Heart right ventricle (tissue), 16 donors: ENCODE measurements at regions of chr18 and their contacts with region 1.

Region 1: DNA sequence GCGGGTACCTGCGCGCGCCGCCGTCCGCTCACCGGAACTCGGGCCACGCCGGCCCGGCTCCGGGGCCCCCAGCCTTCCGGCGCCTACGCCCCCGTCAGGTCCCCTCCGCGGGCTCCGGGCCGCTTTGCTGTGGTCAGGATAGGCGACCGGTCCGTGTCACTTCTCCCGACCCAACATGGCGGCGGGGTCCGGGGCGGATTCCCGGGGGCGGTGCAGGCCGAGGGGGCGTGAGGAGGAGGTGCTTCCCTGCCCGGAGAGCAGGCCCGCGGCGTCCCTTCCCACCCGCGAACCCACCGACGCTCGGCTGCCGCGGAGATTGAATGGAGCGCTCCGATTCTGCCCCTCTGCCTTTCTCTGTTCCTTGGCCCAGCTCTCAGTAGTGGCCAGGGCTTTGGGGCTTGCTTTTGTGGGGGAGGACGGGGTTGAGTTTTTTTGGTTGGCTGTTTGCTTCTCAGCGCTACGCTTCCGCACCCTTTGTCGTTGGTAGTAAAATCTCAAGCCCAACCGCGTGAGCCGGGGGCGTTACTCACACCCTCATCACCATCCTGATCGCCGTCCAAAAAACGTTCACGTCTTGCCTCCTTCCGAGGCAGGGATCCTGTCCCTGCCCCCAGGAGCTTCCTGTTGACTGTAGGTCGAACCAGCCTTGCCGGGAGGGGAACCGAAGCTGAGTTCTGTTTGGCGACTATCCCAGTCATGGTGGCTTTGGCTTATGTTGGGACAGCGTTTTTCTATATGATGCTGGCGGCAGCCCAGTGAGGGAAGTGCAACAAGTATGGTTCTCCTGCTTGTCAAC is 532 bp upstream of the YES1 start:
- DNase-seq: peak; percentile 87
- ATAC-seq: peak; percentile 85 to 95 (median 88)
- H3K4me3 ChIP-seq: peak overlapping the region; percentile 74 to 98 (median 90)
- H3K27ac ChIP-seq: peak overlapping the region; percentile 61 to 98 (median 96)
- H3K4me1 ChIP-seq: peaks cover 0 to 58% (median 43%) of the 10 kb centered on the region in 9 donors
- H3K27me3 ChIP-seq: peaks cover 0 to 82% (median 0%) of the 10 kb centered on the region in 7 donors
- CTCF ChIP-seq: no peak

Region 2: DNA sequence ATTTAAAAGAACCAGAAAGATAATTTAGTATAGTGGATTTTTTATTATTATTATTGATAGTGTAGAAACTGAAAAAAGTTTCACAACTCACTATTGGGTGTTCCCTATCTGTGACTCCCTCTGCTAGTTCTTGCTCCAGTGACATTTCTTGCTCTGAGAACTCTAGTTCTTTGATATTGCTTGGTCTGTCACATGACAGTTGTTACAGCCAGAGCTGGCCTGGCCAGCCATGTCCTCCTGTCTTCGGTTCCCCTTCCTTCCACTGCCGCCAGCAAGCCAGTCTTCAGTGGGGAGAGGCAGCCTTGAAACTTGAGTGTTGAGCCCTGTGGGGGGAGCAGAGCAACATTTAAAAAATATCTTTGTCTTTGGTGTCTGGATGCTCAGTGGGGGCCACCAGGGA is 537.1 kb before region 1 on chr18:
- intact Hi-C with region 1: loop called in 1 of 10 experiments (anchors 10 kb)
- DNase-seq: no peak
- ATAC-seq: peak in 1 of 8 donors; percentile 55
- H3K4me3 ChIP-seq: no peak overlapping the region
- H3K27ac ChIP-seq: no peak overlapping the region
- H3K4me1 ChIP-seq: no peaks in the 10 kb centered on the region
- H3K27me3 ChIP-seq: peaks cover 0 to under 1% (median 0%) of the 10 kb centered on the region in 7 donors
- CTCF ChIP-seq: no peak

Region 3: GRCh38 chr18:741931-742512 is 70.6 kb before region 1 on chr18:
- intact Hi-C with region 1: loop called in 2 of 10 experiments (anchors 5 kb)
- DNase-seq: no peak
- ATAC-seq: peak; percentile 55 to 87 (median 76)
- H3K4me3 ChIP-seq: no peak overlapping the region
- H3K27ac ChIP-seq: peak overlapping the region in 2 of 10 donors; percentile 21 to 42
- H3K4me1 ChIP-seq: peaks cover 0 to 10% (median 0%) of the 10 kb centered on the region in 9 donors
- H3K27me3 ChIP-seq: no peaks in the 10 kb centered on the region
- CTCF ChIP-seq: peak; percentile 65 to 89 (median 80)

Region 4: DNA sequence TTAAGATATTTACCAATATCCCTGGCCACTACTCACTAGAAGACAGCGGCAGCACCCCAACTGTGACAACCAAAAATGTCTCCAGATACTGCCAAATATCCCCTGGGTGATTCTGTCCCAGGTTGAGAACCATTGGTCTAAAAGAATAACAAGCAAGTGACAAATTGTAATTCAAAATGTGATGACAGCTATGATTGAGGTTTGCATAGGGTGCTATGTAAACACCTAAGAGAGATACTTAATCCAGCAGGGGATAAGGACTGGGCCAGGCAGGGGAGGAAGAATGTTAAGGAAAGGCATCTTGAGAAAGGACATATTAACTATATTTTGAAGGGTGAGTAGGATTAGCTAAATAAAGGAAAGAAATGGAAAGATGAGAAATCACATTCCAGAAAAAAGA is 62.1 kb before region 1 on chr18:
- intact Hi-C with region 1: loop called in 3 of 10 experiments (anchors 5 to 10 kb)
- DNase-seq: no peak
- ATAC-seq: no peak
- H3K4me3 ChIP-seq: no peak overlapping the region
- H3K27ac ChIP-seq: no peak overlapping the region
- H3K4me1 ChIP-seq: peaks cover 0 to 5% (median 0%) of the 10 kb centered on the region in 9 donors
- H3K27me3 ChIP-seq: no peaks in the 10 kb centered on the region
- CTCF ChIP-seq: no peak

Region 5: DNA sequence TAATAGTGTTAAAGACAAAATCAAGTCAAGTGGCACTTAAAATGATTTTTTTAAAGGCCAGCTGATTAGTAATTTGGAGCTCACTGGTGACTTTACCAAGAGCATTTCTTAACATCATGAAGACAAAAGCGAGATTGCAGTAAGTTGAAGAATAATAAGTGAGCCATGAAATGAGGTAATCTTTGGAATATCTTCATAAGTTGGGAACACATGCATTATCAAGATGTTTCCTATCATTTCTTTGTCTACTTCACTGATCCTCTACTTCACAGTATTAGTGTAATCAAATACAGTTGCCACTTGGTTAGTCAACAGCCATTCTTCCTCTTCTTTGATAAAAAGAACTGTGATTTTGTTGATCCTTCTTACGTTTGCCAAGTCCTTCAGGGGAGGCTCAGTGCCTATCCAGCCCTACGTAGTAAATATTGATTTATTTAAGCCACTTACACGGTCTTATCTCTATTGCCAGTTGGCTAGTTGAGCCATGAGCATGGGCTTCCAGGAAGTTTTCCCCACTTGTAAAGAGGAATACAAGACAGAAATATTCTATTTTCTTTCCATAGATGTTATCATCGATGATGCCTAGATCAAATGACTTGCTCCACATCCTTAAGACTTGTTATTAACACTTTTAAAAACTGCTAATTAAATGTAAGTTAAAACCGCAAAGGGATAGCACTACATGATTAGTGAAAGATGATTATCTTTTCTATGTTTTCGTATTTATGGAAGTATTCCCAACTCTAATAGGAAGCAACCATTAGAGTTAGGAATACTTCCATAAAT is 46.6 kb before region 1 on chr18:
- intact Hi-C with region 1: loop called in 2 of 10 experiments (anchors 5 kb)
- DNase-seq: no peak
- ATAC-seq: no peak
- H3K4me3 ChIP-seq: no peak overlapping the region
- H3K27ac ChIP-seq: no peak overlapping the region
- H3K4me1 ChIP-seq: peaks cover 0 to 36% (median 7%) of the 10 kb centered on the region in 9 donors
- H3K27me3 ChIP-seq: no peaks in the 10 kb centered on the region
- CTCF ChIP-seq: no peak

Region 6: GRCh38 chr18:830315-830901 is 17.8 kb after region 1 on chr18:
- intact Hi-C with region 1: loop called in 1 of 10 experiments (anchors 2 kb)
- DNase-seq: peak in 1 of 2 donors; percentile 51
- ATAC-seq: peak; percentile 79 to 94 (median 90)
- H3K4me3 ChIP-seq: no peak overlapping the region
- H3K27ac ChIP-seq: peak overlapping the region in 9 of 10 donors; percentile 22 to 79 (median 58)
- H3K4me1 ChIP-seq: peaks cover 0 to 30% (median 15%) of the 10 kb centered on the region in 9 donors
- H3K27me3 ChIP-seq: peaks cover 0 to 42% (median 0%) of the 10 kb centered on the region in 7 donors
- CTCF ChIP-seq: no peak